Activated naive CD4-positive, alpha-beta T cell treated with anti-CD3 and anti-CD28 coated beads, Interleukin-2, amount 10 ng/mL, durations not matched to agents 7 days and 5 days (primary cell): ENCODE measurements at regions of chr16 and their contacts with region 1.

Region 1: GRCh38 chr16:49876716-49877129 is 20.8 kb upstream of the ZNF423 start:
- DNase-seq: peak; percentile 54
- H3K4me3 Mint-ChIP-seq: no peak overlapping the region
- H3K27ac Mint-ChIP-seq: no peak overlapping the region
- H3K4me1 Mint-ChIP-seq: no peaks in the 10 kb centered on the region
- H3K27me3 Mint-ChIP-seq: peaks cover 63% of the 10 kb centered on the region

Region 2: DNA sequence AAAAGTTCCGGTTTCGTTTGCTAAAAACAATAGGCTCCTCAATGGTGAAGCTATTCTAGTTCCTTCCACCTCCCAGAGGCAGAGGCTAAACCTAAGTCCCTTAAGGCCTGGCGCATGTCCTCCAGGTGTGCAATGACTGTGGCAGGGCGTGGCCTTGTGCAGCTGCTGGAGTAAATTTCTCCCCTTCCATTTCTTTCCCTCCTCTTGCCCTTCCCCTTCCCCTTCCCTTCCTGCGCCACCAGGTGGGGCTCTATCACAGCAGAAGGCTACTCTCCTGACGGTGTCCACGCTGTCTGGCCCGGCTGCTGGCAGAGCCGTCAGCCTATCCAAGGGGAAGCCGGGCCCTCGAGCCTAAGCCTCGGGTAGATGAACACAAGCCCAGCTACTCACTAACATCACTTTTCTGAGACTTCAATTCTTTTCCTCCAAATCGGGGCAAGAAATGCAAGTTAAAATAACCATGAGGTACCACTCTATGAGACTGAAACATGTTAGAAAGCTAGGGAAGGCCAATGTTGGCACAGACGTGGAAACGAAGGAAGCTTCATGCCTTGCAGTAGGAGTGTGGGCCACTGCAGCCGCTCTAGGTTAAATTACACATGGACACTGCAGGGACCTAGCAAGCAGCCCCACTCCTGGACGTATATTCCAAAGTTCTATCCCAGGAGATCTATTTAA is 468.7 kb before region 1 on chr16:
- CTCF ChIA-PET with region 1: interaction called, 12 read pairs
- DNase-seq: peak; percentile 80
- H3K4me3 Mint-ChIP-seq: no peak overlapping the region
- H3K27ac Mint-ChIP-seq: no peak overlapping the region
- H3K4me1 Mint-ChIP-seq: no peaks in the 10 kb centered on the region
- H3K27me3 Mint-ChIP-seq: peaks cover 12% of the 10 kb centered on the region

Region 3: DNA sequence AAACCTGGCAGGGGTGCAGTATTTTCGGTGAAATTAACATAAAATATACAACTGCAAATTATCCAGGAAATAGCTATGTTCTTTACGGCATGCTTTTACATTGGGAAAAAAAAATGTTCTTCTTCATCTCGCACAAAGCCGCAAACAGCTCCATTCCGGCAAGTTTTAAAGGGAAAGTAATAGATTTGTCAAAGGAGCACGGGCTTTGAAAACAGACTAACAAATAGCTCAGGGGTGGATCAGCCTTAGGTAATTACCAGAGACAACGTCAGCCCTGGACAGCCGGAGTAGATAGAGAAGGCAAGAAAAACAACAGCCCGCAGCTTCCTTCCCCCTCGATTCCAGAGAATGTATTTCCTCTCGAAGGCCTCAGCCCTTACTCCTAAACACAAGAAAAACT is 280.7 kb before region 1 on chr16:
- CTCF ChIA-PET with region 1: no interaction called
- DNase-seq: no peak
- H3K4me3 Mint-ChIP-seq: no peak overlapping the region
- H3K27ac Mint-ChIP-seq: no peak overlapping the region
- H3K4me1 Mint-ChIP-seq: peaks cover 15% of the 10 kb centered on the region
- H3K27me3 Mint-ChIP-seq: peaks cover 26% of the 10 kb centered on the region

Region 4: DNA sequence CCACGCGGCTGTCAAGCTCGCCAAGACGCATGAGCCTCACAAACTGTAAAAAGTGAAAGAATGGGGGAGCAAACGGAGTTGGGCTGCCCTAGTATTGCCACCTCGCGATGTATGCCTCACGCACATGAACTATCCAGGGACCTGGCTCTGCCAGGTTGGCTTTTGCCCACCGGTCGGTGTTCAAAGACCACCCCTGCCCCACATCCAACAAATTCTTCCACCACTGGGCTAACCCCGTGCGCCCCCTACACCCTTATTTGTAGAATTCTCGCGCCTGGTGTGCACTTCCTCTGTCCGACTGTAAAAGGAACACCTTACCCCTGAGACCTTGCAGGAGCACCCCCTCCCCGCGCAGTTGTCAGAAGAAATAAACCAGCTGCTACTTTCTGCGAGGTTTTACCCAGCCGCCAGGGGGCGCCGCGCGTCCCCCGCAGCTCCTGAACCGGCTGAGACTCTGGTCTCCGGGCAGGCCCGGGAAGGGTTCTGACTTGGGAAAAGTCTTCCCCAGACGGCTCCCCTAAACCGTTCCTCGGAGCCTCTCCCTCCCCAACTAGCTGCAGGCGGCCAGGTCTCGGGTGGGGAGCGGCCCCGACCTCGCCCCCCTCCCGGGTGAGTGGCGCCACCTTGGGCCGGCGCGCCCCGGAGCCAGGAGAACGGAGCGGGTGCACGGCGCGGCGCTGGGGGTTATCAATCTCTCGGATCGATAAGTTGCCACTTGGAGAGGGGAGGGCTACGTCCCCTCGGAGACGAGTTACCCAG is 19.1 kb before region 1 on chr16:
- CTCF ChIA-PET with region 1: interaction called, 11 read pairs
- DNase-seq: peak; percentile 61
- H3K4me3 Mint-ChIP-seq: peak overlapping the region; percentile 74
- H3K27ac Mint-ChIP-seq: peak overlapping the region; percentile 55
- H3K4me1 Mint-ChIP-seq: peaks cover 17% of the 10 kb centered on the region
- H3K27me3 Mint-ChIP-seq: peaks cover 95% of the 10 kb centered on the region

Region 5: GRCh38 chr16:49866595-49867071 is 10.1 kb before region 1 on chr16:
- CTCF ChIA-PET with region 1: interaction called, 14 read pairs
- DNase-seq: no peak
- H3K4me3 Mint-ChIP-seq: no peak overlapping the region
- H3K27ac Mint-ChIP-seq: no peak overlapping the region
- H3K4me1 Mint-ChIP-seq: no peaks in the 10 kb centered on the region
- H3K27me3 Mint-ChIP-seq: peaks cover 54% of the 10 kb centered on the region

Region 6: GRCh38 chr16:49889725-49890394 is 13.1 kb after region 1 on chr16:
- CTCF ChIA-PET with region 1: interaction called, 13 read pairs
- DNase-seq: no peak
- H3K4me3 Mint-ChIP-seq: no peak overlapping the region
- H3K27ac Mint-ChIP-seq: no peak overlapping the region
- H3K4me1 Mint-ChIP-seq: no peaks in the 10 kb centered on the region
- H3K27me3 Mint-ChIP-seq: peaks cover 20% of the 10 kb centered on the region